ENCODE measurements at regions of chr7 and their contacts with region 1.

Region 1: GRCh38 chr7:101138213-101138870 is 11.4 kb downstream of the SERPINE1 start:
- DNase-seq: peak; percentile 91 to 93
- ATAC-seq: peak; percentile 91
- H3K4me3 ChIP-seq: no peak overlapping the region
- H3K27ac ChIP-seq: peak overlapping the region in 1 of 2 donors; percentile 65
- H3K4me1 ChIP-seq: no peaks in the 10 kb centered on the region
- H3K27me3 ChIP-seq: no peaks in the 10 kb centered on the region

Region 2: GRCh38 chr7:101085162-101085987 is 53.0 kb before region 1 on chr7 and contains the start of gene TRIM56:
- intact Hi-C with region 1: loop called in 1 of 2 experiments (anchors 2 kb)
- DNase-seq: peak; percentile 92 to 96
- ATAC-seq: peak; percentile 92
- H3K4me3 ChIP-seq: peak within 1 kb of the TSS; percentile 30 to 71
- H3K27ac ChIP-seq: peak within 1 kb of the TSS; percentile 38 to 69
- H3K4me1 ChIP-seq: no peaks in the 10 kb centered on the region
- H3K27me3 ChIP-seq: no peaks in the 10 kb centered on the region
- total RNA-seq, gene TRIM56: 56.6 to 58.3 TPM

Region 3: DNA sequence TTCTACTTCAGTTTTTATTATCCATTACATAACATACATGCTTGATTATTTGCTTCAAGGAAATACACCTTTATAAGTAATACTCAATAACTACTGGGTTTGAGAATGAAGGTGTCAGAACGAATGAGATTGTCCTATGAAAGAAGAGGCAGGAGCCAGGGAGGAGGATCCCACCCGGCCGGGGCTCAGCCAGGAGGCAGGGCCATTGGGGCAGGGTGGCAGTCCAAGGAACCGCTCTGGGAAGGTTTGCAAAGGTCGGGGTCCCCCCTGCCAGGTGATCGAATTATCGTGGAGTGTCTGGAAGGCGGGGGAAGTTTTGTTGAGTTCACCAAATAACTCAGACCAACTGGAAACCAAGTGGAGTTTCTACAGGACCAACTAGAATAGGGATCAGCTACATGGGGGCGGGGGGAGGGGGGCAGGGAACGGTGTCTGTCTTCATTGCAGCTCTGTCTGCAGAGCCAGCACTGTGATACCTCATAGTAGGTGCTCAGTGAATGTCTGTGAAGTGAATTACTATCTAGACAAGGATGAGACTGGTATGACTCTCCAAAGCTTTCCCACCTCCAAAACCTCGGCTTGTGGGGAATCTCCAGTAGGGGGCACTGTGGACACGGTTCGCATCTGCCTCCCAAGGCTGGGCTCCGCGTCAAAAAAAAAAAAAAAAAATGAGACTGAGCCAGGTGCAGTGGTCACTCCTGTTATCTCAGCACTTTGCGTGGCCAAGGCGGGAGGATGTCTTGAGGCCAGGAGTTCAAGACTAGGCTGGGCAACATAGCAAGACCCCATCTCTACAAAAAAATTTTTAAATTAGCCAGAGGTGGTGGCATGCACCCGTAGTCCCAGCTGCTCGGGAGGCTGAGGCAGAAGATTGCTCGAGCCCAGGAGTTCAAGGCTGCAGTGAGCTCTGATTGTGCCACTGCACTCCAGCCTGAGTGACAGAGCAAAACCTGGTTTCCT is 43.6 kb before region 1 on chr7:
- intact Hi-C with region 1: loop called (anchors 2 to 5 kb)
- DNase-seq: peak in 1 of 2 donors; percentile 67
- ATAC-seq: peak; percentile 70
- H3K4me3 ChIP-seq: no peak overlapping the region
- H3K27ac ChIP-seq: peak overlapping the region in 1 of 2 donors; percentile 64
- H3K4me1 ChIP-seq: no peaks in the 10 kb centered on the region
- H3K27me3 ChIP-seq: no peaks in the 10 kb centered on the region

Region 4: DNA sequence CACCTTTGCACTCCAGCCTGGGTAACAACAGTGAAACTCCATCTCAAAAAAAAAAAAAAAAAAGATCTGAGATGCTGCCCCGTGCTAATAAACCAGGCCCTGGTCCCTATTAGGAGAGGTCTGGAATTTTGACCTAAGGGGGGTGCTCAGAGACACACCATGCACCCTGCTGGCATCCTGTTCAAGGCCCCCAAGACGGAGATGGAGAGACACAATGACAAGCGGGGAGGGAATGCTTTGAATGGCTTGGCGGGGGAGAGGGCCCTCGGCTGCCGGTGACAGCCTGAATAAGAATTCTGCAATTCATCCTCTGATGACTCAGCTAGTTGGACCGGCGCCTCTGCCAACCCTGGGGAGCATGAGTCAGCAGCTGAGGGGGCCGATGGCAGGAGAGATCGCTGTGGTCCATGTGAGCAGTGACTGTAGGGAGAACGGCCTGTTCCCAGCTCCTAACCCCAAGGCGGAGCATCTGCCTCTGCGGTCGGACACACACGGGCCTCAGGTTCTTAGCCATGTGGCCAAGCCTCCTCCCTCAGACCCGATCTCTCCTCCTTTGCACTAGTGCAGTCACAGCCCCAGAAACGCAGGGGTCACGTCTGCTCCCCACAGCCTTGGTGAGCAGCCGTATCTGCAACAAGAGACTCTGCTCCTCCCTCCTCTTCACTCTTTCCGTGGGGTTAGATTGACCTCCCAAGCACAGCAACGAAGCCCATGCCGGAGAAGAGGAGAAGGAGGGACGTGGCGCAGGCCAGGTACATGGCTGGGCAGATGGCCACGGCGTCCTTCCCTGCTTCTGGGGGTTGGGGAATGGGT is 38.2 kb before region 1 on chr7:
- intact Hi-C with region 1: loop called (anchors 2 to 5 kb)
- DNase-seq: peak; percentile 96 to 99
- ATAC-seq: peak; percentile 95
- H3K4me3 ChIP-seq: no peak overlapping the region
- H3K27ac ChIP-seq: peak overlapping the region in 1 of 2 donors; percentile 92
- H3K4me1 ChIP-seq: no peaks in the 10 kb centered on the region
- H3K27me3 ChIP-seq: no peaks in the 10 kb centered on the region

Region 5: GRCh38 chr7:101217388-101218235 is 79.3 kb after region 1 on chr7 and contains the starts of genes PLOD3 and ZNHIT1:
- intact Hi-C with region 1: no loop called
- DNase-seq: peak; percentile 97 to 99
- ATAC-seq: peak; percentile 91
- H3K4me3 ChIP-seq: peak within 1 kb of the TSS; percentile 52 to 83
- H3K27ac ChIP-seq: peak within 1 kb of the TSS in 1 of 2 donors; percentile 66
- H3K4me1 ChIP-seq: no peaks in the 10 kb centered on the region
- H3K27me3 ChIP-seq: no peaks in the 10 kb centered on the region
- total RNA-seq, gene PLOD3: 51.8 to 70.6 TPM
- total RNA-seq, gene ZNHIT1: 48.7 to 54.4 TPM

Region 6: DNA sequence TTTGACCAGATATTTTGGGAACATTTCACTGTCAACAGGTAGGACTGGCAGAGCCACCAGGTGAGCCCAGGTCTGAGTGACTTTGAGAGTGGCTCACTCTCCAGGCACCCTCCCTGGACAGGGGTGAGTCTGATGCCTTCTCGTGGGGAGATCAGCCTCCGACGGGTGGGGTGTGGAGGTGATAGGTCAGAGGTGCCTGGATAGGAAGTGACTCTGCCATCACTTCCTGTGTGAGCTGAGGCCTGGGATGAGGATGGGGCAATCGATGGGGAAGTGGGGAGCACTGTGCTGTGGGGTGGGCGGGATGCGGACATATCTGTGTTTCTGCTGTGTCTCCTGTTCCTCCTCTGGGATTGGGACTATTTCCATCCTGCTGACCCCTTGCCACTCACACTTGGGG is 148.7 kb after region 1 on chr7:
- intact Hi-C with region 1: loop called in 1 of 2 experiments (anchors 2 kb)
- DNase-seq: no peak
- ATAC-seq: no peak
- H3K4me3 ChIP-seq: no peak overlapping the region
- H3K27ac ChIP-seq: no peak overlapping the region
- H3K4me1 ChIP-seq: no peaks in the 10 kb centered on the region
- H3K27me3 ChIP-seq: no peaks in the 10 kb centered on the region